ENCODE measurements at regions of chr2 and their contacts with region 1.

Region 1: DNA sequence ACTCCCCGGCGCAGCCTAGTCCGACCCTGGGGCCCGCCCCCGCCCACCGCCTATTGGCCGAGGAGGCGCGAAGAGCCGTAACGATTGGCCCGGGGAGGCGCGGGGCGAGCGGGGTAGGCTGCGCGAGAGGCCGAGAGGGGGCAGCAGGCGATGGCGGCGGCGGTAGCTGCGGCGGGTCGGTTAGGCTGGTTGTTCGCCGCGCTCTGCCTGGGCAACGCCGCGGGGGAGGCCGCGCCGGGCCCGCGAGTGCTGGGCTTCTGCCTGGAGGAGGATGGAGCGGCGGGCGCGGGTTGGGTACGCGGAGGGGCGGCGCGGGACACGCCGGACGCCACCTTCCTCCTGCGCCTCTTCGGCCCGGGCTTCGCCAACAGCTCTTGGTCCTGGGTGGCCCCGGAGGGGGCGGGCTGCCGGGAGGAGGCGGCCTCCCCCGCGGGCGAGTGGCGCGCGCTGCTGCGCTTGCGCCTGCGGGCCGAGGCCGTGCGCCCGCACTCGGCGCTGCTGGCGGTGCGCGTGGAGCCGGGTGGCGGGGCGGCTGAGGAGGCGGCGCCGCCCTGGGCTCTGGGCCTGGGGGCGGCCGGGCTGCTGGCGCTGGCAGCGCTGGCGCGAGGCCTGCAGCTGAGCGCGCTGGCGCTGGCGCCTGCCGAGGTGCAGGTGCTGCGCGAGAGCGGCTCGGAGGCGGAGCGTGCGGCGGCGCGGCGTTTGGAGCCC is at the start of gene CNNM3:
- DNase-seq: peak; percentile 92
- H3K4me3 Mint-ChIP-seq: peak within 1 kb of the TSS; percentile 77
- H3K27ac Mint-ChIP-seq: peak within 1 kb of the TSS; percentile 18
- H3K4me1 Mint-ChIP-seq: peaks cover 20% of the 10 kb centered on the region
- H3K27me3 Mint-ChIP-seq: no peaks in the 10 kb centered on the region
- CTCF ChIP-seq: peak; percentile 59
- total RNA-seq, gene CNNM3: 9.1 and 9.9 TPM in 2 replicates

Region 2: DNA sequence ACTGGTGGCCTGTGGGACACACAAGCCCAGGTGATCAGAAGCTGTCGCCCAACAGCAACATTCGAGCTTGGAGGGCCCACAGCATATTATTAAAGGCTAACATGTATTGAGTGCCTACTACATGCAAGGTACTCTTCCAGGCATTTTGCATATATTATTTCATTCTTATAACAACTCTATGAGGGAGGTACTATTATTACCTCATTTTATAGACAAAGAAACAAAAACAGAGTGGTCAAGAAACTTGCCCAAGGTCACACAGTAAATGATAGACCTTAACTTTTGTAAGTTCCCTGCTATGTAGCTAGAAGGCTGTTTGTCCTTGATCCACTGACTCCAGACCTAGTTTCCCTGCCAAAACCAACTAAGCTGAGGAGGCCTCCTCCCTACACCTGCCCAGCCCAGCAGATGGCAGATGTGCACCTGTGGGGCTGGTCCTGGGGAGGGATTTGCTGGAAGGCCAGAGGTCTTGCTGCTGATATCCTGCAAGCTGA is 213.9 kb before region 1 on chr2:
- CTCF ChIA-PET with region 1: interaction called, 4 read pairs
- POLR2A ChIA-PET with region 1: no interaction called
- intact Hi-C with region 1: loop called (anchors 1 kb)
- DNase-seq: no peak
- H3K4me3 Mint-ChIP-seq: no peak overlapping the region
- H3K27ac Mint-ChIP-seq: no peak overlapping the region
- H3K4me1 Mint-ChIP-seq: peaks cover 5% of the 10 kb centered on the region
- H3K27me3 Mint-ChIP-seq: no peaks in the 10 kb centered on the region
- CTCF ChIP-seq: no peak

Region 3: DNA sequence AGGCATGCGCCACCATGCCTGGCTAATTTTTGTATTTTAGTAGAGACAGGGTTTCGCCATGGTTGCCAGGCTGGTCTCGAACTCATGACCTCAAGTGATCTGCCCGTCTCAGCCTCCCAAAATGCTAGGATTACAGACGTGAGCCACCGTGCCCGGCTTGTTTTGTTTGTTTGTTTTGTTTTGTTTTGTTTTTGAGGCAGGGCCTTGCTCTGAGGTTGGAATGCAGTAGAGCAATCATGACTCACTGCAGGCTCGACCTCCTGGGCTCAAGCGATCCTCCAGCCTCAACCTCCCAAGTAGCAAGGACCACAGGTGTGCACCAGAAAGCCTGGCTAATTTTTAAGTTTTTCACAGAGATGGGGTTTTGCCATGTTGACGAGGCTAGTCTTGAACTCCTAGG is 64.5 kb before region 1 on chr2:
- CTCF ChIA-PET with region 1: no interaction called
- POLR2A ChIA-PET with region 1: no interaction called
- intact Hi-C with region 1: no loop called
- DNase-seq: no peak
- H3K4me3 Mint-ChIP-seq: no peak overlapping the region
- H3K27ac Mint-ChIP-seq: no peak overlapping the region
- H3K4me1 Mint-ChIP-seq: peaks cover 13% of the 10 kb centered on the region
- H3K27me3 Mint-ChIP-seq: no peaks in the 10 kb centered on the region
- CTCF ChIP-seq: no peak

Region 4: DNA sequence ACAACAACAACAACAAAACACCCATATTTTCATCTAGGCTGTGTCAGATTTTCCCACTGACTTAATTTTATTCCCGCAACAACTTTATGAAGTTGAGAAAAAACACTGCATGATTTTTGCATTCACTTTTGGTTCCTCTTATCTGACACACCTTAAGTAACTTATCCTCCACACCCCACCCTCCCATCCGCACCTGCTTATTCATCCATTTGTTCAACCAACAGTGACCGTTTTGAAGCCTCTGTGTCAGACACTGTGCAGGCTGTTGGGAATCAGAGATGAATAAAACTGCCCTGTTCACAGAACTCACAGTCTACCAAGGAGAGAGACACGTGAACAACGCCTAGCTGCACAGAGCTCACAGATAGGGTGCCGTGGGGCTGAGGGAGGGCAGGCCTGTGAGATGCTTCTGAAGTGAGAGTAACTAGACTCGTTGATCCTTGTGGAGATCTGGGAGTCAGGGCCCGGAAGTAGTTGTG is 48.2 kb before region 1 on chr2:
- CTCF ChIA-PET with region 1: interaction called, 5 read pairs
- POLR2A ChIA-PET with region 1: interaction called, 10 read pairs
- intact Hi-C with region 1: no loop called
- DNase-seq: no peak
- H3K4me3 Mint-ChIP-seq: no peak overlapping the region
- H3K27ac Mint-ChIP-seq: no peak overlapping the region
- H3K4me1 Mint-ChIP-seq: peaks cover 12% of the 10 kb centered on the region
- H3K27me3 Mint-ChIP-seq: no peaks in the 10 kb centered on the region
- CTCF ChIP-seq: no peak

Region 5: GRCh38 chr2:96832754-96833507 is 16.6 kb after region 1 on chr2:
- CTCF ChIA-PET with region 1: interaction called, 7 read pairs
- POLR2A ChIA-PET with region 1: interaction called, 15 read pairs
- intact Hi-C with region 1: no loop called
- DNase-seq: peak; percentile 43
- H3K4me3 Mint-ChIP-seq: no peak overlapping the region
- H3K27ac Mint-ChIP-seq: peak overlapping the region; percentile 39
- H3K4me1 Mint-ChIP-seq: peaks cover 7% of the 10 kb centered on the region
- H3K27me3 Mint-ChIP-seq: no peaks in the 10 kb centered on the region
- CTCF ChIP-seq: no peak

Region 6: GRCh38 chr2:96868555-96869280 is 52.4 kb after region 1 on chr2:
- CTCF ChIA-PET with region 1: interaction called, 4 read pairs
- POLR2A ChIA-PET with region 1: interaction called, 10 read pairs
- intact Hi-C with region 1: no loop called
- DNase-seq: peak; percentile 87
- H3K4me3 Mint-ChIP-seq: peak overlapping the region; percentile 78
- H3K27ac Mint-ChIP-seq: peak overlapping the region; percentile 63
- H3K4me1 Mint-ChIP-seq: peaks cover 5% of the 10 kb centered on the region
- H3K27me3 Mint-ChIP-seq: no peaks in the 10 kb centered on the region
- CTCF ChIP-seq: peak; percentile 82

Region 7: DNA sequence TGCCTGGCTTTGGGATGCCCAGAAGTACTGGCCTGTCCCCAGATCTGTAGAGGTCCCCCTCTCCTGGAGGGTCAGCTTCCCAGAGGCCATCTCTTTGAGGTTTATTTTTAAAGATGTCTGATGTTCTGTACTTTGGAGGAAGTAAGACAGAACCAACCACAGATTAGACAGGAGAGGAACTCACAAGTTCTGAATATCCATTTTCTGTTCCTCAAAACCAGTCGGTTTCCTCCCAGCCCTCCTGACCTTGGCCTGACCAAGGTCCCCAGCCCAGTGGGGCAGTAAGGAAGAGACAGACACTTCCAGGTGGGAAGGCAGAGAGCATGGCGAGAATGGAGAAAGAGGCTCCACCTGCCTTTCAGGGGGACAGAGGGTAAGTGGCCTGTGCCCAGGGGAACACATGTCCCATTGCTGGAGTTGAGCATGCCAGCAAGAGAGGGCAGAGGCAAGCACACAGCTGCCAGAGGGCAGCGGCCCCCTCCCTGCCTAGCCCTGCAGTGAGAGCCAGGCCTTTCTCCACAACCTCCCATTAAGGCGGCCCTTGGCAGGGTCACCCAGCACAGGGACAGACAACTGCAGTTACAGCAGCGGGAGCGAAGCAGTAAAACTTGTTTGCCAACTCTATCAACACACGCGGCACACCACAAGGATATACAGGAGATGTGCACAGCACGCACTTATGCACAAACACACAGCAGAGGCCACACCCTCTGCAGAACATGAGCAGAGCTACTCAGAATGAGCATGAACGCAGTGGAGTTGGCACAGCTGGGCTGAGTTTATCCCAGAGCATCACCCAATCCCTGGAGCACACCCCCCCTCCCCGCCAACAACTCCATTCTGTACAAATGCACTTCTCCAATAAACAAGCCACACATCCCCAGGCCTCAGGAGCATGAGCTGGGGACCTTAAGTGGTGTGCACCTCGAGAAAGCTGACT is 72.1 kb after region 1 on chr2:
- CTCF ChIA-PET with region 1: no interaction called
- POLR2A ChIA-PET with region 1: no interaction called
- intact Hi-C with region 1: no loop called
- DNase-seq: no peak
- H3K4me3 Mint-ChIP-seq: no peak overlapping the region
- H3K27ac Mint-ChIP-seq: no peak overlapping the region
- H3K4me1 Mint-ChIP-seq: peaks cover 32% of the 10 kb centered on the region
- H3K27me3 Mint-ChIP-seq: no peaks in the 10 kb centered on the region
- CTCF ChIP-seq: no peak

Measured in MCF 10A (cell line).